A549 (cell line): ENCODE measurements at regions of chr10 and their contacts with region 1.

Region 1: DNA sequence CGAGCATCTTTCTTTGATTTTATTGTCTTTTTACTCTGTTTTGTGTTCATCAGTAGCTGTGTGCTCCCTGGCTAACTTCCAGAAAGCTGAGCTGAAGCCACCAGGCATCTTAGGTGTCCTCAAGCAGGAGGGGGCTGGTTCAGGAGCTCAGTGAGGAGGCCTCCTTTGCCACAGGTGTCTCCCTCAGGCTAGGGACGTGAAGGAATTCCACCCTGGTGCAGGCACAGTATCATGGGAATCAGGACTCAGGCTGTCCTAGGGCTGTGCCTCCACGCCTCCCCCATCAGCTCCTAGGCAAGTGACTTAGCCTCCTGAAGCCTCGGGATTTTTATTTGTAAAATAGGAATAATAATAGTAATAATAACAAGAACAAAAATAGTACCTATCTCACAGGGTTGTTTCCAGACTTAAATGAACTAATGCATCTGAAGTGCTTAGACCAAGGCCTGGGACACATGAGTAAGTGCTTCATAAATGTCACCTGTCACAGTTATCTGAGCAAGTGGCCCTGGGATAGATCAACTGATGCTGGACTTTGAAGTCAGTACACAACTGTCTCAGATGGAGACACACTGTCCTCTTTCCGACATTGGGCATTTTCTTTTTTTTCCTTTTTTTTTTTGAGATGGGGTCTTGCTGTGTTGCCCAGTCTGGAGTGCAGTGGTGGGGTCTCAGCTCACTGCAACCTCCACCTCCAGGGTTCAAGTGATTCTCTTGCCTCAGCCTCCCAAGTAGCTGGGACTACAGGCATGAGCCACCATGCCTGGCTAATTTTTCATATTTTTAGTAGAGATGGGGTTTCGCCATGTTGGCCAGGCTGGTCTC is 7.0 kb upstream of the NEURL1 start:
- DNase-seq: no peak
- ATAC-seq: no peak
- H3K4me3 ChIP-seq: no peak overlapping the region
- H3K27ac ChIP-seq: no peak overlapping the region
- H3K4me1 ChIP-seq: no peaks in the 10 kb centered on the region
- CTCF ChIP-seq: no peak
- EP300 ChIP-seq: no peak
- POLR2A ChIP-seq: no peak
- RAD21 ChIP-seq: no peak

Region 2: DNA sequence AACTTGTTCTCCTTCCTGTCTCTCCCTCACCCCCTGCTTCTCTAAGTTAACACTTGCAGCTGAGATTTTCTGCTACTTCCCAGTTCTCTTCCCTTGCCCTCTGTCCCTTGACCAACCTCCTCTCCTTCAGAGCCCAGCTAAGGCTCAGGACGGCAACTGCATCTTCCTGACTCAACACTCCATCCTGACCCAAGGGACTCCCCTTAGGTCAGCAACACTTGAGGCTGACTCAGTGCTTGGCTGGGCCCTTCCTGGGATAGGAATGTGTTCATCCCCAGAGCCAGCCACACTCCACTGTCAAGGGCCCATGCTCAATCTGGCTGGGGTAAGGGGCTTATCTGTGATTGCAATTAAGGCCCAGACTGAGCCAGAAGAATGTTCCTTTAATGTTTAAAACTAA is 37.8 kb before region 1 on chr10:
- CTCF ChIA-PET with region 1: interaction called, 12 read pairs
- POLR2A ChIA-PET with region 1: no interaction called
- DNase-seq: no peak
- ATAC-seq: no peak
- H3K4me3 ChIP-seq: no peak overlapping the region
- H3K27ac ChIP-seq: no peak overlapping the region
- H3K4me1 ChIP-seq: peaks cover 18% of the 10 kb centered on the region; the same call in 2 of the 3 replicates
- CTCF ChIP-seq: no peak
- EP300 ChIP-seq: no peak
- POLR2A ChIP-seq: no peak
- RAD21 ChIP-seq: no peak

Region 3: DNA sequence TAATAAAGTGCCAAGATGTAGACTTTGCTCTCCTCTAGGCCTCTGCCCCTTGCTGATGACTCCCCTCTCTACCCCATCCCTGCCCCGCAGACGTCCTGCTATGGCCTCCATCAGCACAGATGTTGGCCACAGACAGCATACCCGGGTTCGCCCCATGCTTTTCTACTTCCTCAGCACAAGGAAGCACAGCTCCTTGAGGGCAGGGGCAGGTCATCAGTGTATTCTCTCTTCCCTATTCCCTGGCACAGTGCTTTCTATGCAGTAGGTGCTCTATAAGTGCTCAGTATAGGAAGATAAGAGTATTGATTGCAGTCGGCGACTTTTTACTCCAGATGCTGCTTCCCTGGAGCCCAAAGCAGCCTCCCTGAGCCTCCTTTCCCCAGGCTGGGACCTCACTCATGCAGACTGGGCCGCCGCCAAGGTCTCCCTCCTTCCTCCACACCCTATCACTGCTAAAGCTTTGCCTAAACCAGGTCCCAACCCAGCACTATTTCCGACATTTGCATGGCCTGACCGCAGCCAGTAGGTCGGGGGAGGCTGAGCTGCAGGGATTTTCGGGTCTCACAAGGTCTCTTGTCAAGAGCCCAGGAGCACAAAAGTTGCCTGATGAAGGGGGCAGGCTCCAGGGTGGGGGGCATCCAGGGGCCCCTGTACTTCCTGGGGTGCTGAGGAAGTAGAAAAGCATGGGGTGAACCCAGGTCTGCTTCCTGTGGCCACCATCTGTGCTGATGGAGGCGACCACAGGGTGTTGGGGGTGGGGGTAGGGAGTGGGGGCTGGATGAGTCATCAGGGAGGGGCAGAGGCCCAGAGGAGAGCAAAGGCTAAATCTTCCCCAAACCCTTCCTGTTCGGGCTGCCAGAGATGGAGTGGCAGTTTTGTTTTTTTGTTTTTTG is 15.5 kb before region 1 on chr10:
- CTCF ChIA-PET with region 1: interaction called, 51 read pairs
- POLR2A ChIA-PET with region 1: no interaction called
- DNase-seq: no peak
- ATAC-seq: peak in 1 of 2 experiments; percentile 19; a peak in 1 of 6 replicates
- H3K4me3 ChIP-seq: no peak overlapping the region
- H3K27ac ChIP-seq: peak overlapping the region in 1 of 2 experiments; percentile 47; a peak in 1 of 6 replicates
- H3K4me1 ChIP-seq: peaks cover 10% of the 10 kb centered on the region; the same call in 2 of the 3 replicates
- CTCF ChIP-seq: no peak
- EP300 ChIP-seq: no peak
- POLR2A ChIP-seq: no peak
- RAD21 ChIP-seq: no peak

Region 4: GRCh38 chr10:103504181-103504783 is 17.7 kb after region 1 on chr10:
- CTCF ChIA-PET with region 1: interaction called, 14 read pairs
- POLR2A ChIA-PET with region 1: no interaction called
- DNase-seq: peak; percentile 77 to 85
- ATAC-seq: peak; percentile 71 to 81; a peak in 5 of 6 replicates
- H3K4me3 ChIP-seq: no peak overlapping the region
- H3K27ac ChIP-seq: peak overlapping the region; percentile 45 to 60; a peak in 3 of 6 replicates
- H3K4me1 ChIP-seq: peaks cover 12% of the 10 kb centered on the region
- CTCF ChIP-seq: no peak
- EP300 ChIP-seq: no peak
- POLR2A ChIP-seq: no peak
- RAD21 ChIP-seq: no peak

Region 5: GRCh38 chr10:103605359-103606095 is 119.0 kb after region 1 on chr10:
- CTCF ChIA-PET with region 1: no interaction called
- POLR2A ChIA-PET with region 1: no interaction called
- DNase-seq: peak; percentile 55 to 74
- ATAC-seq: peak; percentile 63 to 82; a peak in 4 of 6 replicates
- H3K4me3 ChIP-seq: no peak overlapping the region
- H3K27ac ChIP-seq: no peak overlapping the region
- H3K4me1 ChIP-seq: no peaks in the 10 kb centered on the region
- CTCF ChIP-seq: peak; percentile 53
- EP300 ChIP-seq: no peak
- POLR2A ChIP-seq: no peak
- RAD21 ChIP-seq: peak; percentile 41 to 62; a peak in 4 of 5 replicates